Activated CD8-positive, alpha-beta T cell treated with anti-CD3 and anti-CD28 coated beads for 36 hours (primary cell): ENCODE measurements at regions of chr4 and their contacts with region 1.

Region 1: GRCh38 chr4:2220016-2220630 is 21.8 kb downstream of the HAUS3 start:
- DNase-seq: peak; percentile 88
- ATAC-seq: peak; percentile 98
- H3K4me3 Mint-ChIP-seq: no peak overlapping the region
- H3K27ac Mint-ChIP-seq: no peak overlapping the region
- H3K4me1 Mint-ChIP-seq: no peaks in the 10 kb centered on the region
- H3K27me3 Mint-ChIP-seq: no peaks in the 10 kb centered on the region
- CTCF ChIP-seq: peak; percentile 81

Region 2: DNA sequence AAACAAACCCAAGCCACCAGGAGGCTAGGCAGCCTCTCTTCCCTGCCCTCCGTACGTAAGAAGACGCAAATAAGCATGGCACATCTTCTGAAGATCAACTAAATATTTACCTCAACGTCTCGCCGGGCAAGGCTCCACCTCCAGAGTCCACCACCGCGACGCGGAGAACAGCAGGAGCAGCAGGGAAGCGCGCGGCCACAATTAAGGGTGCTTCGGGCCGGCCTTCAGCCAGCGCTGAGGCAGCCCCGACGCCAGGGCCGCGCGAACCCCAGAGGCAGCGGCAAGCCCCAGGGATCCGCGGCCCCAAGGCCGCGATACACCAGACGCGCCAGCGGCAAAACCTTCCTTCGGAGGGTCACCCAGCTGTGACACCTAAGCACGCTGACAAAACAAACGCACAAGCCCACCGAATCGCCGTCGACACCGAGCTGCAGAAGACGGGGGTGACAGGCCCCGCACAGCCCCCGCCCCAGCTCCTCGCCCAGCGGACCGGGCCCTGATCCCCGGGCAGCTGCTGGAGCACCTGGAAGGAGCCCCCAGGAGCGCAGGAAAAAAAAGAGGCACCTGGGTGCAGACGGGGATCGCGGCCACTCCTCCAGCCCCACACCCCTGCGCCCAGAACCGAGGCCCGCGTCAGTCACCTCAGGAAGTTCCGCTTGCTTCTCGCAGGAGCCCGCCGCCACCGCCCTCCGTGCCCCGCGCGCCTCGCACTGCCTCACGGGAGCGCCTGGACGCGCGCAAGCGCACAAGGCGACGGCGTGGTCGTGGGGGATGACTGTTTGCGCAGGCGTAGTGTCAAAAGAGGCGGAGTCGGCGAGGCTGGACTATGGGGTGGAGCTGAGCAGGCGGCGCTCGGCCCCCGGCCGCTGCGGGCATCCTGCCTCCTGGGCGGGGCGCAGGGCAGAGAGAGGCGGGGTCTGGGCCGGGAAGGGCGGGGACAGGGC is 21.6 kb after region 1 on chr4 and contains the starts of genes HAUS3 and POLN:
- CTCF ChIA-PET with region 1: interaction called, 63 read pairs
- POLR2A ChIA-PET with region 1: interaction called, 4 read pairs
- intact Hi-C with region 1: no loop called
- DNase-seq: peak; percentile 99
- ATAC-seq: peak; percentile 98
- H3K4me3 Mint-ChIP-seq: peak within 1 kb of the TSS; percentile 83
- H3K27ac Mint-ChIP-seq: peak within 1 kb of the TSS; percentile 88
- H3K4me1 Mint-ChIP-seq: peaks cover 55% of the 10 kb centered on the region
- H3K27me3 Mint-ChIP-seq: no peaks in the 10 kb centered on the region
- CTCF ChIP-seq: no peak
- total RNA-seq, gene HAUS3: 18.4 to 19.5 TPM
- total RNA-seq, gene POLN: 2.1 to 2.9 TPM

Region 3: DNA sequence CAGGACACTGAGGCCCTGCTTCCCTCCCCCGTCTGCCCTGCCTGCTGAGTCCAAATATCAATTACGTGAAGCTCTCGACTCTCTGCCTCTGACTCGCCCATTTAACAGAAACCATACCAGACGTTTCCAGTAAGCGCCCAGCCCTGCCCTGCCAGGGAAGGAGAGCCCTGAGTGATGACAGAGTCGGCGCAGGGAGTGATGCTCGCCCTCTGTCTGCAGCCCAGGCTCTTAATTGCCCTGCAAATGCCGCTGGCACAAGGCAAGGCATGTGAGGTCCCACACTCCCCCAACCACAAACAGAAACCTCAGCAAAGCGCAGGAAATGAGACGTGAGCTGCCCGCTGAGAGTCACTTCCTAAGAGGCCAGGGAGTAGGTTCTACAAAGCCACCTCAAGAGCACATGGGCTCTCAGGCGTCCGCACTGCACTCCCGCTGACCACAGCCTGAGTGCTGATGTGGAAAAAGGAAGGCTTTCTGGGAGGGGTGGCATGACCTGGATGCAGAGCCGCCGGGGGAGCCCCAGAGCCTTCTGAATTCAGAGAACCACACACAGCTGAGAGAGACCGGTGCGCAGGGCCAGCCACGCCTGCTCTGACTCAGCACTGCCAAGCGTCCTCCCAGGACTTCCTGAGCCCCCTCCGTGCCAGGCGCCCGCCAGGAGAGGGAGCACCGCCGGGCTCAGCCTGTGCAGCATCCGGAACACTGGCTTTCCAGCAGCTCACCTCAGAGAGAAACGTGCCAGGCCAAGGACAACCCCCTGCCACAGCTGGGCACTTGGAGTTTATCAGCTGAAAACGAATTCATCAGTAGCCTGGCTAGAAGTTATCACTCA is 193.0 kb after region 1 on chr4:
- CTCF ChIA-PET with region 1: interaction called, 10 read pairs
- POLR2A ChIA-PET with region 1: no interaction called
- intact Hi-C with region 1: no loop called
- DNase-seq: peak; percentile 96
- ATAC-seq: peak; percentile 86
- H3K4me3 Mint-ChIP-seq: peak overlapping the region; percentile 56
- H3K27ac Mint-ChIP-seq: peak overlapping the region; percentile 99
- H3K4me1 Mint-ChIP-seq: peaks cover 58% of the 10 kb centered on the region
- H3K27me3 Mint-ChIP-seq: peaks cover 26% of the 10 kb centered on the region
- CTCF ChIP-seq: no peak

Region 4: DNA sequence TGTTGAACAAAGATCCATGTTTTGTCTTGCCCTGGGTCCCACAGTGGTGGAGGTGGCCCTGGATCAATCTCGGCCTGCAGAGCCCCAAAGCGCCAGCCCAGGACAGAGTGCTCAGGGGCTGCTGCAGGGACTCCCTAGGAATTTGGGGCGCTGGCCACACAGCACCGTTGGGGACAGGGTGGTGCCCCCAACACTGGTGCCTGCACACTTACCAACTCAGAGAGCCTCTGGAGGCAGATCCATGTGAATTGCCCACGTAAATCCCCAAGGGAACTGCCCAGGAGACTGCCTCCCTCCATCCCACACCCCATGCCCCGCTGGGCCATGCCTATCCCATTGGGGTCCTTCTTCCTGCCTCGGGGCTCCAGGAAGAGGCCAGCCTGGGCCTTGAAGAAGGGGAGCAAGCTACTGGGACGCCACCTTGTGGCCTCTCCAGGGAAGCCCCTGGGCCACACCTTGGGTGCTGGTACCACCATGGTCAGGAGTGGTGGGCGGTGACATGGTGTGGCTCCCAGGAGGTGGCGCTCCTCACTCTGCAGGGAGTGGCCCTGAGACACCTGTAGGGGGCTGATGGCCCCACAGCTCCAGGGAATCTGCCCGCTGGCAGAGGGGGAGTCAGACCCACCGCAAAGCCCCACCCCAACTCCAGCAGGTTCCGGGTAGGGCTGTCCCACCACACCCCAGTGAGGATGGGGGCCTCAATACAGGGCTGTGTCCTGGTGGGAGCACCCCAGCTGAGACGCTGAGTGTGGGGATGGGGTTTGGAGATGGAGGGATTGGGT is 221.5 kb after region 1 on chr4:
- CTCF ChIA-PET with region 1: interaction called, 40 read pairs
- POLR2A ChIA-PET with region 1: no interaction called
- intact Hi-C with region 1: loop called (anchors 10 kb)
- DNase-seq: peak; percentile 94
- ATAC-seq: peak; percentile 100
- H3K4me3 Mint-ChIP-seq: no peak overlapping the region
- H3K27ac Mint-ChIP-seq: peak overlapping the region; percentile 49
- H3K4me1 Mint-ChIP-seq: peaks cover 4% of the 10 kb centered on the region
- H3K27me3 Mint-ChIP-seq: no peaks in the 10 kb centered on the region
- CTCF ChIP-seq: peak; percentile 98

Region 5: GRCh38 chr4:2468445-2469192 is 248.5 kb after region 1 on chr4 and contains the start of gene RNF4:
- CTCF ChIA-PET with region 1: interaction called, 19 read pairs
- POLR2A ChIA-PET with region 1: interaction called, 5 read pairs
- intact Hi-C with region 1: no loop called
- DNase-seq: peak; percentile 99
- ATAC-seq: peak; percentile 87
- H3K4me3 Mint-ChIP-seq: peak within 1 kb of the TSS; percentile 96
- H3K27ac Mint-ChIP-seq: peak within 1 kb of the TSS; percentile 99
- H3K4me1 Mint-ChIP-seq: peaks cover 40% of the 10 kb centered on the region
- H3K27me3 Mint-ChIP-seq: no peaks in the 10 kb centered on the region
- CTCF ChIP-seq: no peak
- total RNA-seq, gene RNF4: 94.6 to 96.2 TPM